Activated naive CD4-positive, alpha-beta T cell treated with anti-CD3 and anti-CD28 coated beads for 36 hours (primary cell): ENCODE measurements at regions of chrX and their contacts with region 1.

Region 1: DNA sequence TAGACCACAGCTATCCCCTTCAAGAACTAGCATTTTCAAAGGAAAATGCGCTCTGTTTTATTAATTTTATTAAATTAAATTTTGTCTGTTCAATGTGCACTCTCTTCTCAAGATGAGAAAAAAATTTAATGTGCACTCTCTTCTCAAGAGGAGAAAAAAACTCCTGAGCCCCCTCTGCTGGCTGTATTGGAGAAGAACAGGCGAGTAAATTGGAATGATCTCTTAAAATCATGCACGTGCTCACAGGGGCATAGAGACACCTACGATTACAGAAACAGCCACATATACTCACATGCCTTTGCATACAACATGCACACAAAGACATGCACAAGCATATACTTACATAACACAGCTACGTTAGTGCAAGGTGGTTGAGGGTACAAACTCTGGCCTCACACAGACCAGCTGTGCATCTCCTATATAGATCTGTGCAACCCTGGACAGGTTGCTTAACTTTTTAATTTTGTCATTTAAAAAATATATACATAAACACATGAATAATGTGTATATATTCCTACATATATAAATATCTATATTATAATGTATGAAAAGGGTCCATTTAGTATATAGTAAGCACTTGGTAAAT is 176.2 kb upstream of the CXorf66 start:
- DNase-seq: peak; percentile 47
- H3K4me3 Mint-ChIP-seq: no peak overlapping the region
- H3K27ac Mint-ChIP-seq: no peak overlapping the region
- H3K4me1 Mint-ChIP-seq: no peaks in the 10 kb centered on the region
- H3K27me3 Mint-ChIP-seq: no peaks in the 10 kb centered on the region

Region 2: GRCh38 chrX:139750390-139750789 is 391.1 kb before region 1 on chrX:
- CTCF ChIA-PET with region 1: no interaction called
- intact Hi-C with region 1: no loop called
- DNase-seq: no peak
- H3K4me3 Mint-ChIP-seq: no peak overlapping the region
- H3K27ac Mint-ChIP-seq: no peak overlapping the region
- H3K4me1 Mint-ChIP-seq: no peaks in the 10 kb centered on the region
- H3K27me3 Mint-ChIP-seq: no peaks in the 10 kb centered on the region

Region 3: GRCh38 chrX:140057001-140057411 is 84.5 kb before region 1 on chrX:
- CTCF ChIA-PET with region 1: interaction called, 6 read pairs
- intact Hi-C with region 1: loop called (anchors 1 kb)
- DNase-seq: peak; percentile 69
- H3K4me3 Mint-ChIP-seq: no peak overlapping the region
- H3K27ac Mint-ChIP-seq: no peak overlapping the region
- H3K4me1 Mint-ChIP-seq: peaks cover 2% of the 10 kb centered on the region
- H3K27me3 Mint-ChIP-seq: no peaks in the 10 kb centered on the region

Region 4: GRCh38 chrX:141258080-141258479 is 1116.5 kb after region 1 on chrX:
- CTCF ChIA-PET with region 1: no interaction called
- intact Hi-C with region 1: no loop called
- DNase-seq: no peak
- H3K4me3 Mint-ChIP-seq: no peak overlapping the region
- H3K27ac Mint-ChIP-seq: no peak overlapping the region
- H3K4me1 Mint-ChIP-seq: no peaks in the 10 kb centered on the region
- H3K27me3 Mint-ChIP-seq: no peaks in the 10 kb centered on the region